ENCODE measurements at regions of chr7 and their contacts with region 1.

Region 1: GRCh38 chr7:17298207-17298839 is at the start of gene AHR:
- DNase-seq: peak; percentile 89
- H3K4me3 ChIP-seq: peak within 1 kb of the TSS; percentile 62 to 97 (median 90)
- H3K27ac ChIP-seq: peak within 1 kb of the TSS; percentile 56
- H3K4me1 ChIP-seq: peaks cover 29% of the 10 kb centered on the region
- H3K27me3 ChIP-seq: no peaks in the 10 kb centered on the region
- CTCF ChIP-seq: no peak
- POLR2A ChIP-seq: peak; percentile 65
- total RNA-seq, gene AHR: 29.3 and 31.8 TPM in 2 replicates

Region 2: GRCh38 chr7:16891338-16891737 is 407.0 kb before region 1 on chr7:
- CTCF ChIA-PET with region 1: interaction called, 15 read pairs
- POLR2A ChIA-PET with region 1: no interaction called
- dilution Hi-C with region 1: no loop called
- intact Hi-C with region 1: no loop called
- DNase-seq: peak; percentile 56
- H3K4me3 ChIP-seq: no peak overlapping the region
- H3K27ac ChIP-seq: no peak overlapping the region
- H3K4me1 ChIP-seq: no peaks in the 10 kb centered on the region
- H3K27me3 ChIP-seq: no peaks in the 10 kb centered on the region
- CTCF ChIP-seq: peak; percentile 15 to 31
- POLR2A ChIP-seq: no peak

Region 3: DNA sequence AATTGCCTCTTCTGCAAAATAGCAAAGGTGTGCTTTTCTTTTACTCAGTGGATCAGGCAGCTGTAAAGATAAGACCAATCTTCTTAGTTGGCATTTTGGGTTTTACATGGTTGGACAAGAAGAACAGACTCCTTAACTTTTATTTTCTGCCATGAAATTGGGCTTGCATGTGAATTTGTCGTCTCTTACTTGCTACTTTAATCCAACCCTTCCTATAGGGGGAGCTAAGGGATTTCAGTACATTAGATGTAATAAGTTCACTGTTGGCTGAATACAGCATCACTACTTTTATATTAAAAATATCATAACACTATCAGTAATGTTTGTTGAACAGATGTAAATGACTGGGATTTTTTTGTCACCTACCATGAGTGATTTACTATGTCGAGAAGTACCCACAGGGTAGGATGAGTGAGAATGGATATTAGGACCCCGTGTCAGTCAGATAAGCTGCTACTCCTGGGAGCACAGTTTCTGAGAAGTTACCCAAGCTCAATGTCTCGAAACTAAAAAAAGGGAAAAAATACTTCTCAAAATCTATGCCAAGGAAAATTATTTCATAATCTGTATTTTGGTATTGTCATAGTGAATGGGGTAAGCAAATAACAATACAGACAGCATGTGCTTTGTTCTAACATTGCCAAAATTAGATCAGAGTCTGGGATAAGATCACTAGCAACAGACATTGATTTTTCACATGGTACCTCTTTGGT is 289.2 kb before region 1 on chr7:
- CTCF ChIA-PET with region 1: interaction called, 106 read pairs
- POLR2A ChIA-PET with region 1: interaction called, 3 read pairs
- dilution Hi-C with region 1: no loop called
- intact Hi-C with region 1: loop called (anchors 1 kb)
- DNase-seq: peak; percentile 43
- H3K4me3 ChIP-seq: no peak overlapping the region
- H3K27ac ChIP-seq: no peak overlapping the region
- H3K4me1 ChIP-seq: peaks cover 3% of the 10 kb centered on the region
- H3K27me3 ChIP-seq: no peaks in the 10 kb centered on the region
- CTCF ChIP-seq: peak in 1 of 2 donors; percentile 21
- POLR2A ChIP-seq: no peak

Region 4: DNA sequence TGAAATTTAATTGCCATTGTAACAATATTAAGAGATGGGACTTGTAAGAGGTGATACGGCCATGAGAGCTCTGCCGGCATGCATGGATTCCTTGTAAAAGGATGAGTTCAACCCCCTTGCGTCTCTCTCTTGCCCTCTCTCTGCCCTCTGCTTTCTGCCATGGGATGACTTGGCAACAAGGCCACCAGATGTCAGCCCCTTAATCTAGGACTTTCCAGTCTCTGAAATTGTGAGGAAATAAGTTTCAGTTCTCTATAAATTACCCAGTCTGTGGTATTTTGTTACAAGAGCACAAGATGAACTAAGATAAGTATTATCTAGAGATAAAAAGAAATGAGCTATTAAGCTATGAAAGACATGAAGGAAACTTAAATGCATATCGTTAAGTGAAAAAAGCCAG is 145.6 kb before region 1 on chr7:
- CTCF ChIA-PET with region 1: no interaction called
- POLR2A ChIA-PET with region 1: no interaction called
- dilution Hi-C with region 1: no loop called
- intact Hi-C with region 1: no loop called
- DNase-seq: no peak
- H3K4me3 ChIP-seq: no peak overlapping the region
- H3K27ac ChIP-seq: no peak overlapping the region
- H3K4me1 ChIP-seq: no peaks in the 10 kb centered on the region
- H3K27me3 ChIP-seq: no peaks in the 10 kb centered on the region
- CTCF ChIP-seq: no peak
- POLR2A ChIP-seq: no peak

Region 5: DNA sequence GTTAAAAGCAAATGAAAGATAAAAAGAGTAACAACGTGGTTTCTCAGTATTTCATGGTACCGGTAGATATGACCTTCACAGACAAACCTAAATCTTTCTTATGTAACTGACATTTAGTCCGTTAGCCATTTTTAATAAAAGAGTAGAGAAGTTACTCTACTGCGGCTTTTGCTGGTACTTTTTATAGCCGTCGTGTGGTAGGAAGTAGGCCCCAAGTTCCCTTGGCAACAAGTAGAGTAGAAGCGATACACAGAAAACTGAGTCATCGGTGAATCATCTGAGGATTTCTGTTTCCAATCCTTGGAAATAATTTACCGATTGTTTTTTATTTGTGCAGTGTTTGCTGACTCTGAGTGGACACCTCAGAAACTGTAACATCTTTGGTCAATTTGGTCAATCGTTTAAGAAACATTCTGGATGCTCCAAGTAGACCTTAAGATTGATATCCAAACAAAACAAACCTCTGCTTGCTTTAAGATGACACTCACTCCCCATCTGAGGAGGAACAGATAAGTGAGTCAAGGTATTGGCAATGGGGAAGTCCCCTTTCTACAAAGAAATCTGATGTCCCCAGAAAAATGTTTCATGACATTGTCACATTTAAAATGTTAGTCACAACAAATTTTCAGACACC is 63.8 kb before region 1 on chr7:
- CTCF ChIA-PET with region 1: interaction called, 10 read pairs
- POLR2A ChIA-PET with region 1: no interaction called
- dilution Hi-C with region 1: no loop called
- intact Hi-C with region 1: loop called (anchors 1 kb)
- DNase-seq: peak; percentile 90
- H3K4me3 ChIP-seq: no peak overlapping the region
- H3K27ac ChIP-seq: peak overlapping the region; percentile 76
- H3K4me1 ChIP-seq: peaks cover 28% of the 10 kb centered on the region
- H3K27me3 ChIP-seq: no peaks in the 10 kb centered on the region
- CTCF ChIP-seq: no peak
- POLR2A ChIP-seq: no peak

Region 6: GRCh38 chr7:17444673-17445072 is 146.3 kb after region 1 on chr7:
- CTCF ChIA-PET with region 1: interaction called, 11 read pairs
- POLR2A ChIA-PET with region 1: no interaction called
- dilution Hi-C with region 1: loop called (anchors 10 kb)
- intact Hi-C with region 1: no loop called
- DNase-seq: peak; percentile 94
- H3K4me3 ChIP-seq: peak overlapping the region in 1 of 3 experiments; percentile 56
- H3K27ac ChIP-seq: peak overlapping the region; percentile 91
- H3K4me1 ChIP-seq: peaks cover 35% of the 10 kb centered on the region
- H3K27me3 ChIP-seq: no peaks in the 10 kb centered on the region
- CTCF ChIP-seq: no peak
- POLR2A ChIP-seq: no peak

Region 7: GRCh38 chr7:17651926-17652385 is 353.6 kb after region 1 on chr7:
- CTCF ChIA-PET with region 1: interaction called, 97 read pairs
- POLR2A ChIA-PET with region 1: no interaction called
- dilution Hi-C with region 1: no loop called
- intact Hi-C with region 1: no loop called
- DNase-seq: peak; percentile 37
- H3K4me3 ChIP-seq: no peak overlapping the region
- H3K27ac ChIP-seq: no peak overlapping the region
- H3K4me1 ChIP-seq: no peaks in the 10 kb centered on the region
- H3K27me3 ChIP-seq: no peaks in the 10 kb centered on the region
- CTCF ChIP-seq: no peak
- POLR2A ChIP-seq: no peak